ENCODE measurements at regions of chr3 and their contacts with region 1.

Region 1: GRCh38 chr3:11140054-11140712 is 14.1 kb upstream of the HRH1 start:
- DNase-seq: peak; percentile 77 to 79
- H3K4me3 ChIP-seq: peak overlapping the region; percentile 28; the same call in 1 of the 2 replicates
- H3K27ac ChIP-seq: peak overlapping the region; percentile 68
- H3K4me1 ChIP-seq: peaks cover 52% of the 10 kb centered on the region
- H3K27me3 ChIP-seq: no peaks in the 10 kb centered on the region
- CTCF ChIP-seq: no peak

Region 2: GRCh38 chr3:11080492-11080891 is 59.7 kb before region 1 on chr3:
- CTCF ChIA-PET with region 1: no interaction called
- POLR2A ChIA-PET with region 1: no interaction called
- intact Hi-C with region 1: loop called (anchors 1 kb)
- DNase-seq: peak; percentile 51 to 68
- H3K4me3 ChIP-seq: no peak overlapping the region
- H3K27ac ChIP-seq: no peak overlapping the region
- H3K4me1 ChIP-seq: peaks cover 37% of the 10 kb centered on the region
- H3K27me3 ChIP-seq: no peaks in the 10 kb centered on the region
- CTCF ChIP-seq: no peak

Region 3: GRCh38 chr3:11155341-11156025 is 15.3 kb after region 1 on chr3:
- CTCF ChIA-PET with region 1: interaction called, 3 read pairs
- POLR2A ChIA-PET with region 1: interaction called, 4 read pairs
- intact Hi-C with region 1: loop called (anchors 1 kb)
- DNase-seq: peak; percentile 62 to 74
- H3K4me3 ChIP-seq: peak overlapping the region; percentile 68
- H3K27ac ChIP-seq: no peak overlapping the region
- H3K4me1 ChIP-seq: peaks cover 12% of the 10 kb centered on the region; the same call in 1 of the 2 replicates
- H3K27me3 ChIP-seq: no peaks in the 10 kb centered on the region
- CTCF ChIP-seq: peak; percentile 76

Region 4: DNA sequence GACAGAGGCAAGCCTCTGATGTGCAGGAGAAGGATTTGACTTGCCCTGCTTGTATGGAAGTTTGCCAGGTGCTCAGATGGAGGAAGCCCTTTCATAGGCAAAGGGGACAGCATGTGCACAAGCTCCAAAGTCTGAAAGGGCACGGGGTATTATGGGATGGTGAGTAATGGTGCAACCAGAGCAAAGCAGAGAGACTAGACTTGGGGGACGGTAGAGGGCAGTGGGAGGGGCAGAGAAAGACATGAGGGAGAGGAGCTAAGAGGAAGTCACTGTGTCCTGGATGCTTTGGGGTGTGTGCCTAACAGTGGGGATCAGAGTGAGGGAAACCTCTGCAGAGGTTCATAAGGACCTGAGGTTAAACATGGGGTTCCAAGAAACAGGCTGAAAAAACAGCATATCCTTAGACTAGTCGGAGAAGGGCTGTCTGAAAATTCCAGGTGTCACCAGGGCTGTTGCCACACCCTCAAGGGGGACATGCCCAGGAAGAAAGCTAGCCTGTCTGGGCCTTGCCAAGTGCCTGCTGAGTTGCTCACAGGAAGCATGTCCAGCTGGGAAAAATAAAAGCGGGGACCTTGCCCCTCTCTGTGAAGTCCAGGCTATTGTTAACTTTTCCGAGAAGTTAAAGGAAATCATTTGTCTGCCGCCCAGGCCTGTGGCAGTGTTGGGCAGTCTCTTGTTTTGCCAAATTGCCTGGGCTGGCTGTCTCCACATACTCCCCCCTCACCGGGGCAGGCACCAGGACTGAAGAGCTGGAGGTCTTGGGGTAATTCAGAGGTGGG is 61.3 kb after region 1 on chr3:
- CTCF ChIA-PET with region 1: no interaction called
- POLR2A ChIA-PET with region 1: interaction called, 12 read pairs
- intact Hi-C with region 1: loop called (anchors 5 kb)
- DNase-seq: peak in 1 of 2 experiments; percentile 71
- H3K4me3 ChIP-seq: no peak overlapping the region
- H3K27ac ChIP-seq: no peak overlapping the region
- H3K4me1 ChIP-seq: peaks cover 12% of the 10 kb centered on the region
- H3K27me3 ChIP-seq: no peaks in the 10 kb centered on the region
- CTCF ChIP-seq: no peak

Region 5: DNA sequence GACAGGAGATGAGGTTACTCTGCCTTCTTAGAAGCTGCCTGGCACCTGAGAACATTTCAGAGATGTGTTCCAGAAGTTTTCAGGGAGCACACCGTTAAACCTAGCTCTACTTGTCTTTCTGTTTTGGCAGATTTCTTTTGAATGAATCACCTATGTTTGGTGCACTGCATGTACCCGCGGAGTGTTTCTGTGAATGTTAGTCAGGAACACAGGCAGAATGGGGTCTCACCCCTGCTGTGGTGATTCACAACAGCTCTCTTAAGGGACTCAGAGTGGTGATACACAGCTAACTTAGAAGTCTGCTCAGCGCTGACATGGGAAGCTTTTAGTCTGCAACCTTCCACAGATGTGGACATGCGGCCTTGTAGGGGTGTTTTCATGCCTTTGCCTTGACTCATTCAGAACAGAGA is 1368.1 kb after region 1 on chr3:
- CTCF ChIA-PET with region 1: no interaction called
- POLR2A ChIA-PET with region 1: no interaction called
- intact Hi-C with region 1: no loop called
- DNase-seq: peak in 1 of 2 experiments; percentile 40
- H3K4me3 ChIP-seq: no peak overlapping the region
- H3K27ac ChIP-seq: no peak overlapping the region
- H3K4me1 ChIP-seq: peaks cover 12% of the 10 kb centered on the region; the same call in 1 of the 2 replicates
- H3K27me3 ChIP-seq: no peaks in the 10 kb centered on the region
- CTCF ChIP-seq: no peak